PC-9 (cell line): ENCODE measurements at regions of chr14 and their contacts with region 1.

Region 1: DNA sequence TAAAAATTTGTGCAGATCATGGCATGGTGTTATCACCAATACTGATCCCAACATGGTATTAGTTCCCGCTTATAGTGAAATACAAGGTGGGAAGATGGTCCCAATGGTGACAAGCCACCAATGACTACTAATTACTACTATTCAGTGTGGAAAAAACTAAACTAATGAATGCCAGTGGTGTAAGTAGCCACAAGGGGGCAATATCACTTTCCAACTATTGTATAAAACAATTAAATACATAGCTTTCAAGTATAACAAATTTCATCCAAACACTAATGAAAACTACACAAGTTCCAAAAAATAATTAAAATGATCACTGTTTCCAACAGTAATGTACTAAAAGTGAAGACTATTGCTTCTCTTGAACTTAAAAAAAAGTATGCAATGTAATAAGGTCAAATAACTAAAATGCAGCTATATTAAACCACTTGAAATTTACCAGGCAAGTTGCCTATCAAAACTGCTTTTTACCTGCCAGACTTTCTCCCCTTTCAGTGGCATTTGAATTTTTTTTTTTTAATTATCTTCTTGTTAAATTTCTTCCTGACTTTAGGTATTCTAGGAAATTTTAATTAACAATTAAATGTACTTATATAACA is 58.0 kb downstream of the PAPLN start:
- DNase-seq: peak in 1 of 2 experiments; percentile 6
- H3K4me3 ChIP-seq: no peak overlapping the region
- H3K27ac ChIP-seq: no peak overlapping the region
- H3K4me1 ChIP-seq: no peaks in the 10 kb centered on the region
- H3K27me3 ChIP-seq: no peaks in the 10 kb centered on the region
- CTCF ChIP-seq: peak; percentile 81

Region 2: DNA sequence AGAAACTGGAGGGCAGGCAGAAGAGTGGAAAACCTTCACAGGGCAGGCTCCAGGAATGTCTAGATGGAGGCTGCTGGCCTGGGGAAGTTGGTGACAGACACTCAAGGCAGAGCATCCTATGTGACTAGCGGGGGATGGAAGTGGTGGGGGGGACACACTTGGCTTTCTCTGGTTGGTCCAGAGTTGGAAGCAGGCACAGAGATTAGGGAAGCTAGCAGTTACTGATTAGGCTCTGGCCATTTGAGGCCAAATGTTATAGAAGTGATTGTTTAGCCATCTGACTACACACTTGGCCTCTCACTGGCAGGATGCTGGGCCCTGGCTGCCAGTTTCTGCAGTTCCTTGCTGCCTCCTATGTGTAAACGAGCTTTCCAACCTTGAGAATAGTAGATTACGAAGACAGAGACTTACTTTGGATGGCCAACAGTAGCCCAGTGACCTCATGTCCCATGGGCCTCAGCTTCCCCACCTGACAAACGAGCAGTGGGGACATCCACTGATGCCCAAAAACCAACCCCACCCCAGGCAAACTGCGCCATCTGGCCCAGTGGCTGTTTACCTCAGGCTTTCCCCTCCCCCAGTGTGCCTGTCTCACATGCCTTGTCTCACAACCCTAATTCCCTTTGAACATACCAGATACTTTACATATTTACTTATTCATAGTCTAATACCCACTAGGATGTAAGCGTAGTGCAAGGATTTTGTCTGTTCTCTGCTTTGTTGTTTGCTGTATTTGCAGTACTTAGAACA is 44.7 kb after region 1 on chr14:
- CTCF ChIA-PET with region 1: no interaction called
- POLR2A ChIA-PET with region 1: no interaction called
- intact Hi-C with region 1: no loop called
- DNase-seq: no peak
- H3K4me3 ChIP-seq: no peak overlapping the region
- H3K27ac ChIP-seq: no peak overlapping the region
- H3K4me1 ChIP-seq: no peaks in the 10 kb centered on the region
- H3K27me3 ChIP-seq: no peaks in the 10 kb centered on the region
- CTCF ChIP-seq: no peak

Region 3: GRCh38 chr14:73458151-73458976 is 163.1 kb after region 1 on chr14 and contains the start of gene NUMB:
- CTCF ChIA-PET with region 1: interaction called, 7 read pairs
- POLR2A ChIA-PET with region 1: no interaction called
- intact Hi-C with region 1: loop called (anchors 5 kb)
- DNase-seq: peak; percentile 97 to 99
- H3K4me3 ChIP-seq: peak within 1 kb of the TSS; percentile 86
- H3K27ac ChIP-seq: 0 out of 2 replicates have a peak within 1 kb of the TSS, but pooled peaks have one; percentile 18
- H3K4me1 ChIP-seq: peaks cover 30% of the 10 kb centered on the region
- H3K27me3 ChIP-seq: no peaks in the 10 kb centered on the region
- CTCF ChIP-seq: no peak
- total RNA-seq, gene NUMB: 59.2 and 64.5 TPM in 2 replicates

Region 4: GRCh38 chr14:73472185-73473114 is 177.2 kb after region 1 on chr14:
- CTCF ChIA-PET with region 1: interaction called, 20 read pairs
- POLR2A ChIA-PET with region 1: no interaction called
- intact Hi-C with region 1: loop called (anchors 2 kb)
- DNase-seq: peak in 1 of 2 experiments; percentile 51
- H3K4me3 ChIP-seq: no peak overlapping the region
- H3K27ac ChIP-seq: no peak overlapping the region
- H3K4me1 ChIP-seq: no peaks in the 10 kb centered on the region
- H3K27me3 ChIP-seq: no peaks in the 10 kb centered on the region
- CTCF ChIP-seq: peak; percentile 77

Region 5: DNA sequence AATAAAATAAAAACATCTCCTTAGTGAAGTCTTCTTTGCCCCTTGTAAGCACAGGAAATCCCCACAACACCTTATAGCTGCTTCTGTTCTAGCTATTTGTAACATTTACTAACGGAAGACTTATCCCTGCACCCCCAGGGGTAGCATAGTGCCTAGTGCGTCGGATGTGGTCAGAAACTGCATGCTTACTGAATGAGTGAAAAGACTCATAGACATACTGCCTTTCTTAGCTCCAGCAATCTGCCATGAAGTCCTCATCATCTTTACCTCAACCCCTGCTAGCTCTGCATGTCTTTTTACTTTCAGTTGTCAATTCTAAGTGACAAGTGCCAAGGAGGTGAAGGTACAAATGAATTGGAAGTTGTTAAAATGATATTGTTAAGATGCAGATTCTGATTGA is 208.4 kb after region 1 on chr14:
- CTCF ChIA-PET with region 1: interaction called, 13 read pairs
- POLR2A ChIA-PET with region 1: no interaction called
- intact Hi-C with region 1: no loop called
- DNase-seq: no peak
- H3K4me3 ChIP-seq: no peak overlapping the region
- H3K27ac ChIP-seq: no peak overlapping the region
- H3K4me1 ChIP-seq: no peaks in the 10 kb centered on the region
- H3K27me3 ChIP-seq: no peaks in the 10 kb centered on the region
- CTCF ChIP-seq: no peak

Region 6: DNA sequence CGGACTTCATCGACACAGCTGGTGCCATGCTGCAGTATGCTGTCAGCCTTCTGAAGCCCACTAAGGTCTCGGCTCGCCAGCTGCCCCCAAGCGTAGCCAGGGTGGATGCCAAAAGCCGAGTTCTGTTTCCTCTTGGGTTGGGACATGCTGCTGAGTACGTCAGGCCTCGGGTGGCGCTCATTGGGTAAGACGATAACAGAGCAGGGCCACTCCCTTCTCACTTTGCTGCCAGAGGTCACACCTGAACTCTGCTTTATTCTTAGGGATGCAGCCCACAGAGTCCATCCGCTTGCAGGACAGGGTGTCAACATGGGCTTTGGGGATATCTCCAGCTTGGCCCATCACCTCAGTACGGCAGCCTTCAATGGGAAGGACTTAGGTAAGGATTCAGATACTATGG is 665.9 kb after region 1 on chr14:
- CTCF ChIA-PET with region 1: no interaction called
- POLR2A ChIA-PET with region 1: interaction called, 10 read pairs
- intact Hi-C with region 1: no loop called
- DNase-seq: no peak
- H3K4me3 ChIP-seq: no peak overlapping the region
- H3K27ac ChIP-seq: no peak overlapping the region
- H3K4me1 ChIP-seq: no peaks in the 10 kb centered on the region
- H3K27me3 ChIP-seq: no peaks in the 10 kb centered on the region
- CTCF ChIP-seq: no peak